Panc1 (cell line): ENCODE measurements at regions of chr2 and their contacts with region 1.

Region 1: GRCh38 chr2:9782197-9782719 is 61.0 kb upstream of the TAF1B start:
- DNase-seq: no peak
- ATAC-seq: 0 out of 2 replicates have a peak, but pooled peaks have one; percentile 28
- H3K4me3 ChIP-seq: no peak overlapping the region
- H3K27ac ChIP-seq: no peak overlapping the region
- H3K4me1 ChIP-seq: no peaks in the 10 kb centered on the region
- H3K27me3 ChIP-seq: no peaks in the 10 kb centered on the region
- CTCF ChIP-seq: no peak

Region 2: DNA sequence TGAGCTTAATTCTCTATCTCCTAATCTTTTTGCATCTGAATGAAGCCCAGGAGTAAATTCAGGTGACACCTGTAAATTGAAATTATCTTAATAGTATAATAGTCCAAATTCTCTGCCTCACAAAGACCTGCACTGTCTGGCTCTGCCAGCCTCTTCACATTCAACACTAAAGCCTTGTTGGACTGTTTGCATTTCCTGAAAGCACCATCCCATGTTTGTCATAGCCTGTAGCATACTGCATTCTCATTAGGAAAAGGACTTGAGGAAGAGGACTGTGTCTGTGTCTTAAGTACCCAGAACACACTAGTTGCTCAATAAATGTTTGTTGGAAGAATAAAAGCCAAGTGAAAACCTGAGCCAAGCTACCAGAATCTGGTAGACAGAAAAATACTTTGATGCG is 126.4 kb after region 1 on chr2:
- CTCF ChIA-PET with region 1: interaction called, 11 read pairs
- POLR2A ChIA-PET with region 1: no interaction called
- in situ Hi-C with region 1: no loop called
- intact Hi-C with region 1: no loop called
- DNase-seq: no peak
- ATAC-seq: no peak
- H3K4me3 ChIP-seq: no peak overlapping the region
- H3K27ac ChIP-seq: no peak overlapping the region
- H3K4me1 ChIP-seq: no peaks in the 10 kb centered on the region
- H3K27me3 ChIP-seq: no peaks in the 10 kb centered on the region
- CTCF ChIP-seq: no peak

Region 3: DNA sequence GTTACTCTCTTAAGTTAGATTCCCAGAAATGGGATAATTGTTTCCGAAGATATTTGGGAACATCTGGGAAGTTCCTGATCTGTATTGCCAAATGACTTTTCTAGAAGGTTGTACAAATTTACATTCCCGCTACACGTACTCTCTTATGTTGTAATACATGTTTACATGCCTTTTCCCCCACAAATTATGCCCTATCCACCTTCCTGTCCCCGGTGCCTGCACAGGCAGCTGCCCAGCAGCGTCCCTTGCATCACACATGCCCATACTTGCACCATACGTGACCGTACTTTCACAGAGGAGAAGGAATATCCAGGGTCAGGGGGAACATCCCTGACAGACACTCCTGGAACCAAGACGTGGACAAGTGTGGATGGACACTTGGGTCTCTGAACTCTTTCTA is 236.9 kb after region 1 on chr2:
- CTCF ChIA-PET with region 1: no interaction called
- POLR2A ChIA-PET with region 1: no interaction called
- in situ Hi-C with region 1: no loop called
- intact Hi-C with region 1: no loop called
- DNase-seq: no peak
- ATAC-seq: no peak
- H3K4me3 ChIP-seq: no peak overlapping the region
- H3K27ac ChIP-seq: no peak overlapping the region
- H3K4me1 ChIP-seq: no peaks in the 10 kb centered on the region
- H3K27me3 ChIP-seq: no peaks in the 10 kb centered on the region
- CTCF ChIP-seq: no peak